PC-9 (cell line): ENCODE measurements at regions of chr14 and their contacts with region 1.

Region 1: DNA sequence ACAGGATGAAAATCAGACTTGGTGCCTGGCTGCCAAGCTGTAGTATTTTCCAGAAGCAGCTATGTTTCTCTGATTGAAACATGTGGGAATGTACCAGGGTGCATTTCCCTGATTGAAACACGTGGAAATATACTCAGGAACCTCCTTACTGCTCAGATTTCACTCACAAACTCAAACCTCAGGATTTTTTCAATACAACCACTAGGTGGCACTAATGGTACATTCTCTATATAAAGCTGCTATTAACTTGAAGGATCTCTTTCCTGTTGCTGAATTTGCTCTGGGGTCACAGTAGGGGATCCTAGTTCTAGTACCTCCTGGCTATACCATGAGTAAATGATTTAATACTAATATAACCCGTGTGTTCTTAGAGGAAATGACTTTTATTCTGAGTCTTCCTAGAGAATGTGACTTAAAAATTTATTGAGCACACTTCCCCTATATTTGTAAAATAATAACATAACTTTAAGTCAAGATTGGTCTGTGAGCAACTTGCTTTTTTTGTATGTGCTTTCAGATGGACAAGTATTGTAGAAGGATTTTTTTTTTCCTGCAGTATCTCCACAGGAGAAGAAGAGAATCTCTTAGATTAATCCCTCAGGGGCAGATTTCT is 173.8 kb upstream of the MIS18BP1 start:
- DNase-seq: peak in 1 of 2 experiments; percentile 41
- H3K4me3 ChIP-seq: no peak overlapping the region
- H3K27ac ChIP-seq: no peak overlapping the region
- H3K4me1 ChIP-seq: no peaks in the 10 kb centered on the region
- H3K27me3 ChIP-seq: no peaks in the 10 kb centered on the region
- CTCF ChIP-seq: peak; percentile 78

Region 2: DNA sequence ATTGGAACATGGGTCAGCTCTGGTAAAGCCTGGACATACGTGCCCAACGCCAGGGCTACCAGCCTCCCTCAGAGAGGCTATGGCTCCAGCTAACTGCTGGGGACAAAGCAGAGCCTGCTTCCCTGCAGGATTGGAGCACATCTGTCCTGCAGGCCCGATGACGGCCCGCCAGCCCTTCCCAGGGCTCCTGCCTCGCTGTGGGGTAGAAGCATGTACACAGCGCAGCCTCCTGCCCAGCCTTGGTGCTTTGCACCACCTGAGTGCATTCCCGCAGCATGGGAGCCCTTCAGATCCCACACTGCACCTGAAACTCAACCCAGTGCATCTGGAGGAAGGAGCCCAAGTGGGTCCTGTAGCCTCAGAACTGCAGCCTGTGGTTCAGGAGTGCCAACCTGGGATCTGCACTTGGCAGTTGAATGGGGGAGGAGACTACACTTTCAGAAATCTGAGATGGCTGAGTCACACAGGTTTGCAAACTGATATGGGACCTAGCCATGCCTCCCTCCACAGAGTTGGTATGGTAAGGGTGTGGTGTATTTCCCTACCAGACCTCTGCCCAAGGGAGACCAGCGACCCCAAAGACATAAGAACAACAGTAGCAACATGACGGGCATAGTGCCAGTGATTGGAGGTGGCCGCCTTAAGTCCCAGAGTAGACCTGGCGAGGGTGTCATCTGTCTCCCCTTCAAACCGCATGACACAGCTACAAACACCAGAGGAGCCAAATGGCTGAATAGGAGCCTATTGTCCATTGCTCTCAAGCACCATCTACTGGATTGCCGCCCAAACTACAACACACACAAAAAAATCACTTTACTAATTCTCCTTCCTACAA is 100.2 kb after region 1 on chr14:
- CTCF ChIA-PET with region 1: no interaction called
- POLR2A ChIA-PET with region 1: no interaction called
- intact Hi-C with region 1: loop called (anchors 1 kb)
- DNase-seq: peak; percentile 56 to 58
- H3K4me3 ChIP-seq: no peak overlapping the region
- H3K27ac ChIP-seq: no peak overlapping the region
- H3K4me1 ChIP-seq: peaks cover 4% of the 10 kb centered on the region; the same call in 1 of the 2 replicates
- H3K27me3 ChIP-seq: no peaks in the 10 kb centered on the region
- CTCF ChIP-seq: peak; percentile 72

Region 3: GRCh38 chr14:45810152-45810872 is 383.5 kb after region 1 on chr14:
- CTCF ChIA-PET with region 1: no interaction called
- POLR2A ChIA-PET with region 1: no interaction called
- intact Hi-C with region 1: loop called (anchors 10 kb)
- DNase-seq: no peak
- H3K4me3 ChIP-seq: no peak overlapping the region
- H3K27ac ChIP-seq: no peak overlapping the region
- H3K4me1 ChIP-seq: no peaks in the 10 kb centered on the region
- H3K27me3 ChIP-seq: no peaks in the 10 kb centered on the region
- CTCF ChIP-seq: no peak

Region 4: GRCh38 chr14:45940307-45940706 is 513.5 kb after region 1 on chr14:
- CTCF ChIA-PET with region 1: no interaction called
- POLR2A ChIA-PET with region 1: no interaction called
- intact Hi-C with region 1: loop called (anchors 5 kb)
- DNase-seq: no peak
- H3K4me3 ChIP-seq: no peak overlapping the region
- H3K27ac ChIP-seq: no peak overlapping the region
- H3K4me1 ChIP-seq: no peaks in the 10 kb centered on the region
- H3K27me3 ChIP-seq: no peaks in the 10 kb centered on the region
- CTCF ChIP-seq: no peak

Region 5: DNA sequence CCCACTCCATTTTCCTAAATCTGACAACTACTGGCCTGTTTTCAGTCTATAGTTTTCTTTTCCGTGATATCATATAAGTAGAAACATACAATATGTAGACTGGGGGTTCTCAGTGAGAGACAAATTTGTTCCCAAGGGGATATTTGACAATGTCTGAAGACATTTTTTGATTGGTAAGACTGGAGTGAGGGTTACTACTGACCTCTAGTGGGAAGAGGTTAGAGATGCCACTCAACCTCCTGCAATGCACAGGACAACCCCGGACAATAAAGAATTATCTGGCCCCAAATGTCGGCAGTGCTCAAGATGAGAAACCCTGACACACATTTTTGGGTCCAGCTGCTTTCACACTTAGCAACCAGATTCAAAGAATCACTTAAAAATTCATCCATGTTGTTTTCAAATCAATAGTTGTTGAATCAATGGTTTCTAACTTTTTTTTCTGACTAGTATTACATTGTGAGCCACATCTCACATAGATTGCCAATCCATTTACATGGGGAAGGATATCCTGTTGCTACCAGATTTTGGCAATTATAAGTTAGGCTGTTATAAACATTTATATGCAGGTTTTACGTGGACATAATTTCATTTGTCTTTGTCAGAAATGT is 917.7 kb after region 1 on chr14:
- CTCF ChIA-PET with region 1: no interaction called
- POLR2A ChIA-PET with region 1: no interaction called
- intact Hi-C with region 1: loop called (anchors 2 kb)
- DNase-seq: peak in 1 of 2 experiments; percentile 1
- H3K4me3 ChIP-seq: no peak overlapping the region
- H3K27ac ChIP-seq: no peak overlapping the region
- H3K4me1 ChIP-seq: no peaks in the 10 kb centered on the region
- H3K27me3 ChIP-seq: no peaks in the 10 kb centered on the region
- CTCF ChIP-seq: peak; percentile 74

Region 6: DNA sequence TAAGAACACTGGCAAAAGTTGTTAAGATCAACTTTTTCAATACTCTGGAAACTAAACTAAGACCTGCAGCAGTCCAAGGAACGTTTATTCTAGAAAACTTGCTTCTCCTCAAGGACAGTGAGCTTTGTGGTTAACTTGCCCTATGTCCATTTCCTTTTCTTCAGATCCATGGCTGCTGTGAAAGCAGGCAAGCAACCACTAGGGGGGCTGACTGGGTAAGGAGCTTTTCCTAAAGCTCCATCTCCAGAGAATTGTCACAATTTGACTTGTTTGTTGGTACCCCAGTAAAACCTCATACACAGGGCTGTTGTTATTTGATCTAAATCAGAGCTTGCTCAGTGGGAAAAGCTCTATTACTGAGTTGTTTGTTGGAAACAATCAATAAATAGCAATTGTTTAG is 1235.0 kb after region 1 on chr14:
- CTCF ChIA-PET with region 1: no interaction called
- POLR2A ChIA-PET with region 1: no interaction called
- intact Hi-C with region 1: no loop called
- DNase-seq: no peak
- H3K4me3 ChIP-seq: no peak overlapping the region
- H3K27ac ChIP-seq: no peak overlapping the region
- H3K4me1 ChIP-seq: no peaks in the 10 kb centered on the region
- H3K27me3 ChIP-seq: no peaks in the 10 kb centered on the region
- CTCF ChIP-seq: peak; percentile 22; the same call in 1 of the 2 replicates